WTC11 (cell line): ENCODE measurements at regions of chr11 and their contacts with region 1.

Region 1: DNA sequence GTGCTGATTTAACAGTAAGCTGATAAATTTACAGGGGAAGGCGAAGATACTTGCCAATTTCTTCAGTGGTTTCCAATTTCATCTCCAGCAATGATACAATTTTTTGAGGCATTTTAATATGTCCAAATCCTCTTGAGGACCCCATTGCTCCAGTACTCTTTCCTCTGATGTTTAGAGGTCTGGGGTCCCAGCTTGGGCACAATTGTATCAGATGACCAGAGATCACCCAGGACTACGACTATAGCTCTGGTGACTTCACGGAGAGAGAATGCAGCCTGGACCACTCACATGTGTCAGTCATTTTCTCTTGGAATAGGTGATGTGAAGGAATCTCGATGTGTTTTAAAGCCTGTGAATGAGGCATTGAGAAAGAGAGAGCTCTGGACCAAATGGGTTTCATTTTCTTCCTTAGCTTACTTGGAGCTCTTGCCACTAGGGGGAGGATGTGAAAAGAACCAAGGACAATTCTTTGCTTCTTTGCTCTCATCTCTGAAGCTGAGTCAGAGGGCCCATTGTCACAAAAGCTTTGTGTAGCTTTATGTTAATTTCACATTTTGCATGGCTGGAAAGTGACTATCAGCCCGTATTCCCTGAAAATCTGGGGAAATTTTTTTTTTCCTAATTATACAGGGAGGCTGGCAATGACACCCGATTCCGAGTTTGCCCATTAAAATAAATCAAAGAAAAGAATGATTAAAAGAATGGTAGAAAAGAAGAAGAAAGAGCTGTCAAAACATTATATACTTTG is 6.7 kb upstream of the CCDC90B start:
- DNase-seq: no peak
- ATAC-seq: peak; percentile 90
- H3K4me3 Mint-ChIP-seq: 0 out of 2 replicates have a peak overlapping the region, but pooled peaks have one; percentile 11
- H3K27ac Mint-ChIP-seq: peak overlapping the region; percentile 66; the same call in 1 of the 2 replicates
- H3K4me1 Mint-ChIP-seq: peaks cover 18% of the 10 kb centered on the region
- H3K27me3 Mint-ChIP-seq: no peaks in the 10 kb centered on the region; the same call in 1 of the 2 replicates
- CTCF ChIP-seq: peak; percentile 37; the same call in 1 of the 2 replicates

Region 2: DNA sequence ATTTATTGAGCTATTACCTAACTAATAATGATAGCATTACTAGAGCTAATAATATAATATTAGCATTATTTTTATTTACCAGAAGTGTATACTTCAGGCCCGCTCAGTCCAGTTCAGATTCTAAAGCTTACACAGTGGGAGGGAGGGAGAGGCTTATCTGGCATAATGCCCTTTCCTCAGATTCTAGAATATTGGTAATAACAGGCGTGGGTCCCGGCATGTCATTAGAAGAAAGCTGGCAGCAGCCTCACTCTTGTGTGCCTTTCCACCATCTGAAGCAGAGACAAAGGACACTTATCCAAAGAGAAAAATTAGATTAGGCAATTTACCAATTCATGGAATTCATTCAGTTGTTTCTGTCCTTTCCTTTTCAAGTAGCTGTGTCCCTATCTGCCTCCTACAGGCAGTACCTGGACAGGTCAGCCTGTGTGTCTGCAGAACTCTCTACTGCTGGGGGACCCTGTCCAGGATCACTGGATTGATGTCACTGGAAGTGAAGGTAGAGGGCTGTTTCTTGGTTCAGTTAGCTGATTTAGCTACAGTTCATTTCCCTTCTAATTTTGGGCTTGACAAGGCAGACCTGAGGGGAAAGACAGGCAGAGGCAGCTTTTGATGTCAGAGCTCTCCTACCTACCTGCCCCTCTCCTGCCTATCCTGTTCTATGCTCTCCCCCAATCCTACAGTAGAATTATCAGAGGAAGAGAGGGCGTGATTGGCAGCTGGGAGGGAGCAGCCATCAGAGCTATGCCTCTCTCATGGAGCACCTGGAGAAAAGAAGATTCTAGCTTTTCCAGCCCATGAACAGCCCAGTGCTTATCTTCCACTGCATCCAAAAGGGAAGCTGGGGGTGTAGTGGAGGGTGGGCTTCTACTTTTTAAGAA is 13.6 kb after region 1 on chr11:
- CTCF ChIA-PET with region 1: interaction called, 26 read pairs
- POLR2A ChIA-PET with region 1: no interaction called
- DNase-seq: no peak
- ATAC-seq: peak; percentile 79
- H3K4me3 Mint-ChIP-seq: no peak overlapping the region
- H3K27ac Mint-ChIP-seq: no peak overlapping the region
- H3K4me1 Mint-ChIP-seq: peaks cover 4% of the 10 kb centered on the region
- H3K27me3 Mint-ChIP-seq: no peaks in the 10 kb centered on the region; the same call in 1 of the 2 replicates
- CTCF ChIP-seq: no peak

Region 3: GRCh38 chr11:83521647-83522596 is 229.0 kb after region 1 on chr11:
- CTCF ChIA-PET with region 1: interaction called, 14 read pairs
- POLR2A ChIA-PET with region 1: no interaction called
- DNase-seq: peak; percentile 38
- ATAC-seq: peak; percentile 97
- H3K4me3 Mint-ChIP-seq: no peak overlapping the region
- H3K27ac Mint-ChIP-seq: no peak overlapping the region
- H3K4me1 Mint-ChIP-seq: peaks cover 28% of the 10 kb centered on the region
- H3K27me3 Mint-ChIP-seq: no peaks in the 10 kb centered on the region
- CTCF ChIP-seq: peak; percentile 22; the same call in 1 of the 2 replicates

Region 4: DNA sequence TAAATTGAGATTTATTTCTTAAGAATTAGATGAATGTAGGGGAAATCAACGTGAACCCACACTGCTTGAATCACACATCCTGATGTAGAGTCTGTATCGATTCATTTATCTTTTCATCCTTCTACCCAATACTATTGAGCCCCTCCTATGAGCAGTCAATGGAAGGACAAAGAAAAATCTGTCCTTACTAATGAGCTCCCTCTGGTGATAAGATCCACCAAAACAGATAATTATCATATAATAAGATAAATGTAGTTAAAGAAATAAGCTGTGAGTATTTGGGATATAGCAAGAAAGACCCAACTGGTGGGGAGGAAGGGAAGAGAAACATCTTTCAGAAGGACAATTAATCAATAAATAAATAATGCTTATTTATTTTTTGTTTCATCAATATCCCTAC is 378.4 kb after region 1 on chr11:
- CTCF ChIA-PET with region 1: interaction called, 10 read pairs
- POLR2A ChIA-PET with region 1: no interaction called
- DNase-seq: no peak
- ATAC-seq: peak; percentile 44; the same call in 1 of the 2 replicates
- H3K4me3 Mint-ChIP-seq: no peak overlapping the region
- H3K27ac Mint-ChIP-seq: no peak overlapping the region
- H3K4me1 Mint-ChIP-seq: peaks cover 9% of the 10 kb centered on the region
- H3K27me3 Mint-ChIP-seq: no peaks in the 10 kb centered on the region
- CTCF ChIP-seq: no peak

Region 5: DNA sequence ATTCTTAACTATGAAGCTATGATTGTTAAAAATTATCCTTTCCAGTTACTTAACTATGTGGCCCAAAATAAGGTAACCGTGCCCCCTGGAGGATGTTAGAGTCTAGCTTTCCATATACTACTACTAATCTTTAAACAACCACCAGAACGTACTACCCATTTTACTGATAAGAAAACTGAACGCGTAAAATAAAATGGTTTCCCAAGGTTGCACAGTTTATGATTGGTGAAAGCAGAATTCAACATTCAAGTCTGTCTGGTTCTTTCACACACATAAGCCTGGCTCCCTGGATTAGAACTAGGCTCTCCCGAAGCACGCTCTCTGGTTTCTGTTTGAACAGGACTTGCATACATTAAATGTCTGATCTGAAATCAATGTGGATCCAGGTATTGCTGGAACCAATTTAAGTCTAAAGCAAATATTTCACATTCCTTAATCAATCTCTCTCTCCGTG is 431.2 kb after region 1 on chr11:
- CTCF ChIA-PET with region 1: interaction called, 27 read pairs
- POLR2A ChIA-PET with region 1: no interaction called
- DNase-seq: no peak
- ATAC-seq: no peak; the same call in 1 of the 2 replicates
- H3K4me3 Mint-ChIP-seq: peak overlapping the region; percentile 78
- H3K27ac Mint-ChIP-seq: peak overlapping the region; percentile 99
- H3K4me1 Mint-ChIP-seq: peaks cover 68% of the 10 kb centered on the region
- H3K27me3 Mint-ChIP-seq: 0 out of 2 replicates have a peak, but pooled peaks cover 4% of the 10 kb centered on the region
- CTCF ChIP-seq: no peak

Region 6: DNA sequence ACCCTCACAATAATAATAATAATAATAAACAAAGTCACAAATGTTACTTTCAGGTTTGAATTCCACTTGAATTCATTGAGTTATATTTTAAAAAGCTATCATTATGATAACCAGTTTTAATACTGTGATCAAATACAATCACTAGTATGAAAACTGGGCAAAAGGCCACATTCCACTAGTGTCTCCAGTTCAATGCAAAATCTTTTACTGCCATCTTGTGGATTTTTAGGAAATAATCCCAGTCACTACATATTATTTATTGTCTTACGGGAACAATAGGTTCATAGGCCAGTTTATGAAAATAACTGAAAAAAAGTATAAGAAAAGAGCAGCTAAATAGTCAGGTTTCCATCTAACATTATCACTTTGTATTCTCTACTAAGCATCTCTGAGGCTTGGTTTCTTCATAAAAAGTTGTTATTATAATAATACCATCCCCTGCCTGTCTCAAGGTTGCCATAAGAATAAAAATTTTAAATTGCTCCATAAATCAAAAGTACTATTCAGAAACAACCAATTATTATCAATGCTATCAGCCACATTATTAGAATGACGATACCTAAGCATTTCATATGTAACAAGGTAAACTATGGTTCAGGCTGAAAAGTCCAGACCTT is 527.2 kb after region 1 on chr11:
- CTCF ChIA-PET with region 1: interaction called, 15 read pairs
- POLR2A ChIA-PET with region 1: no interaction called
- DNase-seq: no peak
- ATAC-seq: no peak
- H3K4me3 Mint-ChIP-seq: no peak overlapping the region
- H3K27ac Mint-ChIP-seq: no peak overlapping the region
- H3K4me1 Mint-ChIP-seq: no peaks in the 10 kb centered on the region
- H3K27me3 Mint-ChIP-seq: no peaks in the 10 kb centered on the region
- CTCF ChIP-seq: peak; percentile 39; the same call in 1 of the 2 replicates